ENCODE measurements at regions of chr6 and their contacts with region 1.

Region 1: DNA sequence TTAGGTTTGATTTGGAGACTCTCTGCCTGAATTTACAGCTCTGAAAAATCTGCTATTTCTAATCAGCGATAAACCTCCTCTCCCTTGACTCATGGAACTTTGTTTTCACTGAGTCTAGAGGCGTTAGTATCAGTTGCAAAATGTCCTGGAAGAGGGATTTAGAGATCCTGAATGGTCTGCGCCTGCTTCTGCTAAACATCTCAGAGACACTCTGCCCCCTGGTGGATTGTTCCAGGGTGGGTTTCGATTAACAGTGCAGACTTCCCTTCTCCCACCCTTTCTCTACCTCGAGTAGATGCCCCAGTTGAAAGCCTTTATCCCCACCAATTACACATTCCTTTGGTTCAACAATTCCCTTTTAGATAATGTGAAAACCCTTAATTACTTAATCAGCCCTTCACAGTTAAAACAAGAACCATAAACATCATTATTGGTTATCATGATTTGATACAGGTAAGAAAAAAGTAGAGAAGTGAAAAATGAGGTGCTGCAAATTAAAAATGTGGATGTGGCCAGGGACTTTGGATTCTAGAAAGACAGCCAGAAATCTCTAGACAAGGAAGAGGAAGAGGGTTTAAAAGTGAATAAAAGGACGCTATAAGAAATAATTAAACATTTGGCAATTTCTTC is 5.5 kb downstream of the HTR1B start:
- DNase-seq: peak; percentile 62
- H3K4me3 ChIP-seq: no peak overlapping the region
- H3K27ac ChIP-seq: no peak overlapping the region
- H3K4me1 ChIP-seq: no peaks in the 10 kb centered on the region
- H3K27me3 ChIP-seq: peaks cover 4% of the 10 kb centered on the region
- CTCF ChIP-seq: peak; percentile 24 to 62 (median 55)
- POLR2A ChIP-seq: no peak

Region 2: GRCh38 chr6:75893058-75893775 is 1564.6 kb before region 1 on chr6:
- intact Hi-C with region 1: loop called (anchors 5 kb)
- DNase-seq: no peak
- H3K4me3 ChIP-seq: no peak overlapping the region
- H3K27ac ChIP-seq: no peak overlapping the region
- H3K4me1 ChIP-seq: no peaks in the 10 kb centered on the region
- H3K27me3 ChIP-seq: no peaks in the 10 kb centered on the region
- CTCF ChIP-seq: peak in 3 of 4 experiments; percentile 65 to 71 (median 67)
- POLR2A ChIP-seq: no peak

Region 3: GRCh38 chr6:75934643-75935472 is 1523.0 kb before region 1 on chr6:
- intact Hi-C with region 1: loop called (anchors 5 kb)
- DNase-seq: peak; percentile 59
- H3K4me3 ChIP-seq: peak overlapping the region; percentile 5 to 19
- H3K27ac ChIP-seq: no peak overlapping the region
- H3K4me1 ChIP-seq: no peaks in the 10 kb centered on the region
- H3K27me3 ChIP-seq: no peaks in the 10 kb centered on the region
- CTCF ChIP-seq: peak; percentile 31 to 72 (median 69)
- POLR2A ChIP-seq: no peak